ENCODE measurements at regions of chr11 and their contacts with region 1.

Region 1: GRCh38 chr11:22130462-22131053 is 62.3 kb upstream of the ANO5 start:
- ATAC-seq: peak in 7 of 8 experiments; percentile 40 to 75 (median 55)
- H3K4me3 ChIP-seq: no peak overlapping the region
- H3K27ac ChIP-seq: no peak overlapping the region
- H3K4me1 ChIP-seq: no peaks in the 10 kb centered on the region

Region 2: GRCh38 chr11:20387241-20388095 is 1743.1 kb before region 1 on chr11 and contains the start of gene PRMT3:
- in situ Hi-C with region 1: loop called in 1 of 9 experiments (anchors 25 kb)
- ATAC-seq: peak; percentile 85 to 93 (median 90)
- H3K4me3 ChIP-seq: peak within 1 kb of the TSS; percentile 74 to 95 (median 81)
- H3K27ac ChIP-seq: peak within 1 kb of the TSS; percentile 79 to 80
- H3K4me1 ChIP-seq: peaks cover 6 to 9% of the 10 kb centered on the region in 2 donors
- total RNA-seq, gene PRMT3: 12.6 to 35.1 (median 17.1) TPM

Region 3: GRCh38 chr11:22920939-22921565 is 790.5 kb after region 1 on chr11:
- in situ Hi-C with region 1: no loop called
- ATAC-seq: peak in 6 of 8 experiments; percentile 59 to 90 (median 78)
- H3K4me3 ChIP-seq: no peak overlapping the region
- H3K27ac ChIP-seq: no peak overlapping the region
- H3K4me1 ChIP-seq: no peaks in the 10 kb centered on the region

Measured in motor neuron (in vitro differentiated cells).